ENCODE measurements at regions of chr2 and their contacts with region 1.

Region 1: GRCh38 chr2:199535445-199536177 is 77.9 kb upstream of the SATB2 start:
- DNase-seq: no peak
- ATAC-seq: no peak

Region 2: DNA sequence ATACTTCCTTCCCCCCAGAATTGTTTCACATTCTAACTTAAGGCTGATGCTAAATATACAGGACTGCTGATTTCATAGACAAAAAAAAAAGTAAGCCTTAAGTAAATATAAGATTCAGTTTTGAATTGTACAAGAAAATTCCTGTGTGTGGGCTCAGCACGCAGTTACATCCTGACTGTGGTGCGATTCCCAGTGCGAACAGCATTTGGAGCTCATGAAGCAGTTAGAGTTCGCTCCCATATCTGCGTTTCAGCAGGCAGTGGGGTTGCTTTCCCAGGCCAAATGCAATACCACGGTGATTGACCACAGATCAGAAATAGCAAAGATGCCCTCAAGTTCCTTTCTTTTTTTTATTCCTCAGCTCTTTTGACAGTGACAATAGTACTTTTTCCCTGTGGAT is 153.5 kb before region 1 on chr2:
- intact Hi-C with region 1: no loop called
- DNase-seq: no peak
- ATAC-seq: no peak

Region 3: GRCh38 chr2:199495149-199495548 is 40.5 kb before region 1 on chr2:
- intact Hi-C with region 1: loop called (anchors 1 kb)
- DNase-seq: no peak
- ATAC-seq: no peak

Region 4: DNA sequence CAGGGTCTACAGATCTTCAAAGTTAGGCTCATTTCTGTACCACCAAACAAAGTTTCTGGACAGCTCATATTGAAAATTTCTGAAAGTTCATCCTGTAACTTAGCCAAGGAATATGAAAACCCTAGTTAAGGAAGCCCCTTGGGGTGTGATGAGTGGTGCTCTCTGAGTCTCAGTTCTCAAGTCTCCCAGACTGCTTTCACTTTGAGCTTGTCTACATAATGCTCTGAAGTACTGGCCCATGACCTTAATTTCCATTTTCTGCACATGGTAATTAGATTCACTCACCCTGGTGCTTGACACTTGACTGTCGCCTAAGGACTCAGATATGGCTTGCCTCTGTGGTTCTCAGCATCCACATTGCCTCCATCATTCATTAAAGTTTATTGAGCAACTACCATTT is 26.2 kb before region 1 on chr2:
- intact Hi-C with region 1: no loop called
- DNase-seq: no peak
- ATAC-seq: no peak